ENCODE measurements at regions of chr3 and their contacts with region 1.

Region 1: DNA sequence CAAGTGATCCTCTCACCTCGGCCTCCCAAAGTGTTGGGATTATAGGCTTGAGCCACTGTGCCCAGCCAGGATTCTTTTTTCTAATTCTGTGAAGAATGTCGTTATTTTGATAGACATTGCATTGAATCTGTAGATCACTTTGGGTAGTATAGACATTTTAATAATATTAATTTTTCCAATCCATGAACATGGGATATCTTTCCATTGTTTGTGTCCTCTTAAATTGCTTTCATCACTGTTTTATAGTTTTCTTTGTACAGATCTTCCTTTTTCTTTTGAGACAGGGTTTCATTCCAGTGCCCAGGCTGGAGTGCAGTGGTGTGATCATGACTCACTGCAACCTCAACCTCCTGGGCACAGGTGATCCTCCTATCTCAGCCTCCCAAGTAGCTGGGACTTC is 11.6 kb upstream of the KCTD6 start:
- DNase-seq: no peak
- H3K4me3 ChIP-seq: no peak overlapping the region
- H3K27ac ChIP-seq: no peak overlapping the region
- H3K4me1 ChIP-seq: no peaks in the 10 kb centered on the region
- H3K27me3 ChIP-seq: no peaks in the 10 kb centered on the region
- CTCF ChIP-seq: no peak
- POLR2A ChIP-seq: no peak

Region 2: GRCh38 chr3:58452176-58452575 is 28.1 kb before region 1 on chr3:
- intact Hi-C with region 1: loop called (anchors 1 kb)
- DNase-seq: no peak
- H3K4me3 ChIP-seq: no peak overlapping the region
- H3K27ac ChIP-seq: no peak overlapping the region
- H3K4me1 ChIP-seq: no peaks in the 10 kb centered on the region
- H3K27me3 ChIP-seq: no peaks in the 10 kb centered on the region
- CTCF ChIP-seq: no peak
- POLR2A ChIP-seq: no peak

Region 3: DNA sequence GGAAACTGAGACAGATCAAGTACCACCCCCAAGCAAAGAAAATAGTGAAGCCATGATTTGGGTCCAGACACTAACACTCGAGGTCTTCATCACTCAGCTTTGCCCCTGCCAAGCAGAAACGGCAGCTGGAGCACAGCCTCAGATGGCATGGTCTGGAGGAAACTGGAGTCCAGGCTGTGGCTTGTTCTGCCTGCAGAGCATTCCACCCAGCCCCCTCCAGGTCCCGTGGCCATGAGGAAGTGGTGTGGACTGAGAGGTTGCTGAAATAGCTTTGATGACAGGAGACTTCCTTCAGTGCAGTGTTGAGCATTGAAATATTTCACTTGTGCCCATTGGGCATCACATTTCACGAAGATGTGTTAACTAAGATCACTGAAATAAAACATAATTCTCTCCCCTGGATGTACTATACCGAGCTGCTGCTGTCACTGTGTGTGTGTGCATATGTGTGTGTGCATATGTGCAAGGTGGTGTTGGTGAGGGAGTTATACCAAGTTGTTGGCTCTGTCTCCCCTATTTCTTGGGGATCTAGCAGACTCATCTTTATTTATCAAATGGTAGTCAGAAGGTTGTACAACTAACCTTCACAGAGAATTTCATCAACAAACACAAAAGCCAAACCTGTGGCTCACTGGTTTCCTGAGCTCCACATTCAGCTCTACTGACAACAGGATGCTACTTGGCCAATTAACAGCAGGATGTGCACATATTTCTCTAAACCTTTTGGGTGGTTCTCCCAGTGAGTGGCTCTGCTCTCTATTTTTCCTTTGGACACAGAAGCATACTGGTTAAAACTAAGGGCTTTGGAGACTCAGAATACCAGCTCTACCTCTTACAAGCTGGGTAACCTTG is 1229.6 kb after region 1 on chr3:
- intact Hi-C with region 1: no loop called
- DNase-seq: peak in 1 of 2 donors; percentile 31
- H3K4me3 ChIP-seq: no peak overlapping the region
- H3K27ac ChIP-seq: no peak overlapping the region
- H3K4me1 ChIP-seq: no peaks in the 10 kb centered on the region
- H3K27me3 ChIP-seq: no peaks in the 10 kb centered on the region
- CTCF ChIP-seq: no peak
- POLR2A ChIP-seq: no peak